Right ventricle myocardium inferior (tissue), 1 donor: ENCODE measurements at regions of chr7 and their contacts with region 1.

Region 1: DNA sequence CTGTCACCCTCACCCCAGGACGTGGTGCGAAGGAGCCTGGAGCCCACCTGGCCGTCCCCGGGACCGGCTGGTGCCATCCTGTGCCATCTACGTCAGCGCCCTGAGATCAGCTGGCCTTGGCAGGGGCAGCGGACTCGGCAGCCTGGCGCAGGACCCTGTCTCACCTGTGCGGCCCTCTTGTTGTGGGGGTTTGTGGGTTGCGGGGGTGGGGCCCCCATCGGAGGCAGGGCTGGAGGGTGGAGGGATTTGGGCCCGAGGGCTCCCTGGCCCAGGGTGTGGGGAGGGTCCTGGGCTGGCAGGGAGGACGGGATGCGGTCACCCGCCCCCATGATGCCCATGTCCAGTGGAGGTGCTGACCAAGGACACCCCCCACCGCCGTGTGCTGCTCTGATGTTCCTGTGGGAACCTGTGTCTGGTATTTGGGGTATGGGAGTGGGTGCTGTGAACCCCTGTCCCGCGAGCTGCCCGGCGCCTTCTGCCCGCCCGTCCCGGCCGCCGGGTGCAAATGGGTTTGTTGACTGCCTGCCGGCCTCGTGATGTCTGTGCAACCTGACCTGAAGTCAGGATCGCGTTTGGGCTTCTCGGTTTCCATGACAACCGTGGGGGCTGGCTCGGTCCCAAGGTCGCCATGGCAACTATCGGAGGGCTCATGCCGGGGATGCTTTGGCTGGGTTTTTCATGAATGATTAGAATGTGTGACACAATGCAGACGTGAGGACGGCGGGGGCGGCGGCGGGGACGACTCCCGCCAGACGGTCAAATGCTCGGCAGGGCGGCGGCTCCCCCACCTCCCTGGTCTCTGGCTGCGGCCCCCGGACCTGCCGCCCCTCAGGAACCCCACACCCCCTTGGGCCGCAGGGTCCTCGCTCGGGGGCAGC is 7.3 kb downstream of the MAFK start:
- DNase-seq: peak; percentile 92
- ATAC-seq: peak; percentile 43

Region 2: GRCh38 chr7:1512781-1513656 is 24.8 kb before region 1 on chr7:
- intact Hi-C with region 1: loop called (anchors 2 kb)
- DNase-seq: peak; percentile 88
- ATAC-seq: peak; percentile 91

Region 3: DNA sequence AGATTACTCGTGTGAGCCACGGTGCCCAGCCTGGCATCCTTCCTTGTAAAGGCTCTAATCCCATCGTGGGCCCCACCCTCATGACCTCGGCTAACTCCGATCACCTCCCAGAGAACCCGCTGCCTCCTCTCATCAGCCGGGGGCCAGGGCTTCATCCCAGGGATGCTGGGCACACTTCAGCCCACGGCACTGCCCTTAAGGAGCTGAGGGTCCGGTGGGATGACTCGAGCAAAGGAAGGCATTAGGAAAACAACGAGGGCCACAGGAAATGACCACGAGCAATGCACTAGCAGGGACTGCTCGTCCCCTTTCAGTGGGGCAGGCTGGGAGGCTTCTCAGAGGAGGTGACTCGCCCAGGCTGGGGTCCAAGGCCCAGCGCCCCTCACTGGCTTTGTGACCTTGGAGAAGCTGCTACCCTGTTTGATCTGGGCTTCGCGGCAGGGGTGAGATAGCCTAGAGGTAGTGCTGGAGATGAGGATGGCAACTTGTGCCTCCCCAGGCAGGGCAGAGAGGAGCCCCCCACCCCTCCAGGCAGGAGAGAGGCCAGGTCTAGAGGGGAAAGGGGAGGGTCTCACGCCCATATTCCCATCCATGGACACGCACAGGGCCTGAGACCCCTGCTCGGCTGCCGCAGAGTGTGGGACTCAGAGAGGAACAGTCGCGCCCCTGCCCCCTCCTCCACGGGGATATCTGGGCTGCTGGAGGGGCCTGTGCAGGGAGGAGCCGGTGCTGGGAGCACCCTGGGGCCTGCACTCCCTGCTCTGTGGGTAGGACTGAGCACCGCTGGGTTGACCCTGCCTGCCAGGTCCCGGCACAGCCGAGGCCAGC is 159.1 kb after region 1 on chr7:
- intact Hi-C with region 1: no loop called
- DNase-seq: no peak
- ATAC-seq: no peak